CD8-positive, alpha-beta T cell (primary cell): ENCODE measurements at regions of chr12 and their contacts with region 1.

Region 1: GRCh38 chr12:106282457-106283097 is 20.0 kb upstream of the TCP11L2 start:
- DNase-seq: peak in 7 of 9 experiments; percentile 29 to 76 (median 54)
- ATAC-seq: peak; percentile 83
- H3K4me3 ChIP-seq: no peak overlapping the region
- H3K4me3 Mint-ChIP-seq: no peak overlapping the region
- H3K27ac ChIP-seq: no peak overlapping the region
- H3K27ac Mint-ChIP-seq: no peak overlapping the region
- H3K4me1 ChIP-seq: no peaks in the 10 kb centered on the region
- H3K4me1 Mint-ChIP-seq: peaks cover 4% of the 10 kb centered on the region
- H3K27me3 ChIP-seq: no peaks in the 10 kb centered on the region
- H3K27me3 Mint-ChIP-seq: peaks cover 10% of the 10 kb centered on the region
- CTCF ChIP-seq: peak; percentile 83

Region 2: DNA sequence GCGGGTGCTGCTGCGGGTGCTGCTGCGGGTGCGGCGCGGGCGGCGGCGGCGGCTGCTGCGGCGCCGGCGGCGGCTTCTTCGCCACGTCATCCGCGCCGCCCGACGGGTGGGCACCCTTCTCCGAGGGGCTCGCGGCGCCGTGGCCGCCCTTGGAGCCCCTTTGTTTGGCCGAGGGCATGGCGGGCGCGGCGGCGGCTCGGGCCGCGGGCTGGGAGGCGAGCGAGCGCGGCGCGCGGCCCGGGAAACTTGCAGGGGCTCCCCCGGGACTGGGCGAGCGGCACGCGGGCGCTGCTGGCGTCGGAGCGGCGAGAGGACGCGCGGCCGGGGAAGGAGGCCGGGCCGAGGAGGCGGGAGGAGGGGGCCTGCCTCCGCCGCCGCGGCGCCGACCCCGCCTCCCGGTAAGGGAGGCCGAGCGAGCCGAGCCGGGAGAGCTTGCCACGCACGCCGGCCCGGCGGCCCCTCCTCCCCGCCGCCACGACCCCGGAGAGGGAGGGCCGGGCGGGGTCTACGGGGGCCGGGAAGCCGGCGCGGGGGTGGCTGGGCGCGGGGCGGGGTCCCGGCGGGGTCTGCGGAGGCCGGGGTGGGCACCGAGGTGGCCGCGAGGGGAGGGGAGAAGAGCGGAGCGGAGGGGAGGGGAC is 34.8 kb before region 1 on chr12 and contains the start of gene CKAP4:
- CTCF ChIA-PET with region 1: interaction called, 9 read pairs
- POLR2A ChIA-PET with region 1: interaction called, 4 read pairs
- intact Hi-C with region 1: loop called (anchors 2 to 5 kb)
- DNase-seq: peak; percentile 10 to 83 (median 58)
- ATAC-seq: peak; percentile 55
- H3K4me3 ChIP-seq: peak within 1 kb of the TSS; percentile 66 to 84
- H3K4me3 Mint-ChIP-seq: peak within 1 kb of the TSS; percentile 86
- H3K27ac ChIP-seq: peak within 1 kb of the TSS; percentile 72 to 73
- H3K27ac Mint-ChIP-seq: peak within 1 kb of the TSS; percentile 95
- H3K4me1 ChIP-seq: peaks cover 32% of the 10 kb centered on the region
- H3K4me1 Mint-ChIP-seq: peaks cover 35% of the 10 kb centered on the region
- H3K27me3 ChIP-seq: no peaks in the 10 kb centered on the region
- H3K27me3 Mint-ChIP-seq: no peaks in the 10 kb centered on the region
- CTCF ChIP-seq: no peak
- total RNA-seq, gene CKAP4: 19.3 to 19.7 TPM

Region 3: DNA sequence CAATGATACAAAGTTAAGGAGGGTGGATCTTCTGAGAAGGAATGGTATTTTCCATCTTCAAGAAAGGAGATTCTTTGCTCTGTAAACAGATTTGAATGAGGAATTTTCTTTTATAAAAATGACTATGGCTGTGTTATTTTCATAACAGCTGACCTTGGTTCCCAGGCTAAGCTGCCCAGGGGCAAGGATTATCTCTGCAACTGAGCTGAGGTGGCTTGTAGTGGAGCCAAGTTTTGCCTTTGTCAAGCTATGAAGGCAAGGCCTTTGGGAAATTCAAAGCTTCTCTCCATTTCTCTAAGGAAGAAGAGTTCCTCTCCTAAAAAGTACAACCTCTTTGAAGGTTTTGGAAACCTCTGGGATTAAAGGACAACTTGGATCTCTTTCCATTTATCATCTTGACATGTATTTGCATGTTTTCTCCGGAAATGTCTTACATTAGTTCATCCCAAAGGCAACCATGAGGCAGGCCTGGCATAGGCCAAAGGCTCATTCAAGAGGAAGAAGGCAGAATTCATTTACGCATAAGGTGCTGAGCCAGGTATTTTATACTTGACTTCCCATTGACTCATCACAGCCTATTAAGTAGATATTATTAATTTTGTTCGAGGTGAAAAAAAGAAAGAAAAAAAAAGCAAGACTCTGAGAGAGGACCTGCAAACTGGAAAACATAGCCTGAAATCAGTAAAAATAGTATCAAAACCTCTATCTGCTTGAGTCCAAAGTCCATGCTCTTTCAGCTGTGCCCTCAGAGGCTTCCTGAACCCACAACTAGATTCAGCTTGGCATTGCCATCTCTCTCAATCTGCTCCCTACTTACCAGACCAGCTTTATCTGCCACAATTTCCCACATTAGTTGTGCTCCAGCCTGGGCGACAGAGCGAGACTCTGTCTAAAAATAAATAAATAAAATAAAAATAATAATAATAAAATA is 10.7 kb before region 1 on chr12:
- CTCF ChIA-PET with region 1: interaction called, 24 read pairs
- POLR2A ChIA-PET with region 1: interaction called, 3 read pairs
- intact Hi-C with region 1: no loop called
- DNase-seq: no peak
- ATAC-seq: no peak
- H3K4me3 ChIP-seq: no peak overlapping the region
- H3K4me3 Mint-ChIP-seq: no peak overlapping the region
- H3K27ac ChIP-seq: no peak overlapping the region
- H3K27ac Mint-ChIP-seq: no peak overlapping the region
- H3K4me1 ChIP-seq: no peaks in the 10 kb centered on the region
- H3K4me1 Mint-ChIP-seq: peaks cover 2% of the 10 kb centered on the region
- H3K27me3 ChIP-seq: no peaks in the 10 kb centered on the region
- H3K27me3 Mint-ChIP-seq: no peaks in the 10 kb centered on the region
- CTCF ChIP-seq: no peak

Region 4: GRCh38 chr12:106296193-106296877 is 13.8 kb after region 1 on chr12:
- CTCF ChIA-PET with region 1: interaction called, 36 read pairs
- POLR2A ChIA-PET with region 1: interaction called, 10 read pairs
- intact Hi-C with region 1: loop called in 1 of 2 experiments (anchors 1 kb)
- DNase-seq: no peak
- ATAC-seq: no peak
- H3K4me3 ChIP-seq: no peak overlapping the region
- H3K4me3 Mint-ChIP-seq: no peak overlapping the region
- H3K27ac ChIP-seq: no peak overlapping the region
- H3K27ac Mint-ChIP-seq: no peak overlapping the region
- H3K4me1 ChIP-seq: peaks cover 11% of the 10 kb centered on the region
- H3K4me1 Mint-ChIP-seq: peaks cover 18% of the 10 kb centered on the region
- H3K27me3 ChIP-seq: no peaks in the 10 kb centered on the region
- H3K27me3 Mint-ChIP-seq: no peaks in the 10 kb centered on the region
- CTCF ChIP-seq: no peak